ENCODE measurements at regions of chr16 and their contacts with region 1.

Region 1: DNA sequence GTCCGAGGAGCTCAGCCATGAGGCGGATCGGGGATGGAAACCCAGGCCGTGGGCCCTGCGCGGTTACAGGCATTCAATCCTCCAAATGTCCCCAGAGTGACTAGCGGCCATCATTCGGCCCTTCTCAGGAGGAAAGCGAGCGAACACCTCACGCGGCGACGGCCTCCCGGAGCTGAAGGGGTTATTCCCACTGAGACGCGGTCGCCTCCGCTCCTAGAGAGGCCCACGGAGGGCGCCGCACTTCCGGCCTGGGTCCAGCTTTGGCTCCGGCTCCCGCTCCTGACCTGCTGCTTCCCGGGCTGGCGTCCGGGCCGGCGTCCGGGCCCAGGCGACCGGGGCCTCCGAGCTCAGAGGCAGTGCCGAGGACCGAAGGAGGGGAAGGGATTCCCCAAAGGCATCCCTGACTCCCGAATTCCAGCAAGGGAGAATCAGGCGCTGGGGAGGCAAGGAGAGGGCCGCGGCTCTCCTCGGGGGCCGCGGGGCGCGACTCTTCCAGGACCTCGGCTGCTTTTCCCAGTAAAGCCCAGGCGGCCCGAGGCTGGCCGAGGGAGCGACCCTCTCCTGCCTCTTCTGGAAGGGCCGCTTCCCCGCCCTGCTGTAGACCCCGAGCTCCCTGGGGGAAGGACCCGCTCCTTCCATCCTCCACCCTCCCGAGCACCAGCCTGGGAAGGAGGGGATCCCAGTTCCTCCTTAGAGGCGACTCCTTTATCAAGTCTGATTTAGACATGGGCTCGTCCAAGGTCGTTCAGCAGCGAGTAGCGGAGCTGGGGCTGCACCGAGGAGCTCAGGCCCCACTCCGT is 18.6 kb upstream of the ZNF629 start:
- DNase-seq: peak; percentile 68
- ATAC-seq: peak; percentile 81
- H3K4me3 ChIP-seq: peak overlapping the region; percentile 61 to 91 (median 87)
- H3K4me3 Mint-ChIP-seq: peak overlapping the region; percentile 92
- H3K27ac ChIP-seq: peak overlapping the region in 1 of 2 donors; percentile 65
- H3K27ac Mint-ChIP-seq: peak overlapping the region; percentile 64
- H3K4me1 ChIP-seq: peaks cover 10 to 19% of the 10 kb centered on the region in 2 donors
- H3K4me1 Mint-ChIP-seq: peaks cover 16% of the 10 kb centered on the region
- H3K27me3 ChIP-seq: peaks cover 0 to 9% (median 0%) of the 10 kb centered on the region in 4 experiments
- H3K27me3 Mint-ChIP-seq: peaks cover 6% of the 10 kb centered on the region
- CTCF ChIP-seq: no peak

Region 2: DNA sequence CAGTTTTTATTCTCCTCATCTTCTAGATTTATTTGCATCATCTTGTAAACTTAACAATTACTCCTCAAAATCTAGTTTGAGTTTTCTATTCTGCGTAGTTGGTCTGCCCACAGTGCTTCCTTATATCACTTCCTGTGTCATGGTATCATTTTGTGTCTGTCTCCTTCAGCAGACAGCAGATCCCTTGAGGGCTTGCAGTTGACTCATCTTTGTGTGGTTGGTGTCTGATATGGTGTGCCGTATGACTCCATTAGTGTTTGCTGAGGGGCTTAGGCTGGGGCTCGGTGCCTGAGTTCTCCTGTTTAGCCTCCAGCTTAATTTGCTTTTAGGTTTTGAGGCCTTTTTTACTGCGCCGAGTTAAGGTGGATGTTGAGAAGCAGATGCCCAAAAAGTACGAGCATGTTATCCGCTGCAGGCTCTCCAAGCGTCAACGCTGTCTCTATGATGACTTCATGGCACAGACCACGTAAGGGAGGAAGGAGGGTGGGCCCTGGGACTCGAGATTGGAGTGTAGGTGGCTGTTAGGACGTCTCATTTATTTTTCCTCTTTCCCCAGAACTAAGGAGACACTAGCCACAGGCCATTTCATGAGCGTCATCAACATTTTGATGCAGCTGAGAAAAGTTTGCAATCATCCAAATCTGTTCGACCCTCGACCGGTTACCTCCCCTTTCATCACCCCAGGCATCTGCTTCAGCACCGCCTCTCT is 89.7 kb before region 1 on chr16:
- CTCF ChIA-PET with region 1: no interaction called
- POLR2A ChIA-PET with region 1: no interaction called
- intact Hi-C with region 1: no loop called
- DNase-seq: peak; percentile 64
- ATAC-seq: peak; percentile 96
- H3K4me3 ChIP-seq: no peak overlapping the region
- H3K4me3 Mint-ChIP-seq: peak overlapping the region; percentile 66
- H3K27ac ChIP-seq: peak overlapping the region; percentile 20 to 68
- H3K27ac Mint-ChIP-seq: peak overlapping the region; percentile 90
- H3K4me1 ChIP-seq: peaks cover 5 to 9% of the 10 kb centered on the region in 2 donors
- H3K4me1 Mint-ChIP-seq: peaks cover 17% of the 10 kb centered on the region
- H3K27me3 ChIP-seq: no peaks in the 10 kb centered on the region
- H3K27me3 Mint-ChIP-seq: no peaks in the 10 kb centered on the region
- CTCF ChIP-seq: no peak

Region 3: GRCh38 chr16:30786936-30787612 is 18.5 kb before region 1 on chr16 and contains the start of gene ZNF629:
- CTCF ChIA-PET with region 1: interaction called, 9 read pairs
- POLR2A ChIA-PET with region 1: interaction called, 15 read pairs
- intact Hi-C with region 1: loop called (anchors 1 kb)
- DNase-seq: peak; percentile 60
- ATAC-seq: peak; percentile 62
- H3K4me3 ChIP-seq: peak within 1 kb of the TSS; percentile 54 to 84 (median 80)
- H3K4me3 Mint-ChIP-seq: peak within 1 kb of the TSS; percentile 87
- H3K27ac ChIP-seq: peak within 1 kb of the TSS in 1 of 2 donors; percentile 48
- H3K27ac Mint-ChIP-seq: peak within 1 kb of the TSS; percentile 32
- H3K4me1 ChIP-seq: peaks cover 16 to 20% of the 10 kb centered on the region in 2 donors
- H3K4me1 Mint-ChIP-seq: peaks cover 17% of the 10 kb centered on the region
- H3K27me3 ChIP-seq: peaks cover 0 to 17% (median 4%) of the 10 kb centered on the region in 4 experiments
- H3K27me3 Mint-ChIP-seq: peaks cover 10% of the 10 kb centered on the region
- CTCF ChIP-seq: no peak
- total RNA-seq, gene ZNF629: 6.4 and 6.9 TPM in 2 replicates